Panc1 (cell line): ENCODE measurements at regions of chr16 and their contacts with region 1.

Region 1: DNA sequence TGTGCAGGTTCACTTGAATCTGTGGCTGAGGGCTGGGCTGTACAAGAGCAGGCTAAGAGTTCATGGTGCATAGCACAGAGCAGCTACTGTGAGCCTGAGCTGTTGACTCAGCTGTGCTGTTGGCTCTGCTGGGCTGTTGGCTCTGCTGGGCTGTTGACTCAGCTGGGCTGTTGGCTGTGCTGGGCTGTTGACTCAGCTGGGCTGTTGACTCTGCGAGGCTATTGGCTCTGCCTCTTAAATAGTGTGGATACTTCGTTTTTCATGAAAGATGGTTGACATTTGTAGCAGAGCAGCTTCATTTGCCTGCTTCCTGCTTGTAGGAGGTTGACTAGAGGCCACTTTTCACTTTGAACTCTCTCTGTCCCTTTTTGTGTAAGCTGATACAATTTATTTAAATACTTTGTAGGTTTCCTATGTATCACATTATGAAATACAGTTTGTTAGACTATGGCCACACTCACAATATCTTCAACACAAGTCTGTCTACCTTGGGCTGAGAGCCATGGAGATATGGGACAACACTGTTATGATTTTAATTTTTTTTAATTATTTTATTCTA is 40.3 kb upstream of the CCNF start:
- DNase-seq: peak; percentile 28
- ATAC-seq: peak; percentile 94
- H3K4me3 ChIP-seq: no peak overlapping the region
- H3K27ac ChIP-seq: peak overlapping the region; percentile 63
- H3K4me1 ChIP-seq: peaks cover 6% of the 10 kb centered on the region; the same call in 1 of the 2 replicates
- H3K27me3 ChIP-seq: no peaks in the 10 kb centered on the region
- CTCF ChIP-seq: no peak

Region 2: DNA sequence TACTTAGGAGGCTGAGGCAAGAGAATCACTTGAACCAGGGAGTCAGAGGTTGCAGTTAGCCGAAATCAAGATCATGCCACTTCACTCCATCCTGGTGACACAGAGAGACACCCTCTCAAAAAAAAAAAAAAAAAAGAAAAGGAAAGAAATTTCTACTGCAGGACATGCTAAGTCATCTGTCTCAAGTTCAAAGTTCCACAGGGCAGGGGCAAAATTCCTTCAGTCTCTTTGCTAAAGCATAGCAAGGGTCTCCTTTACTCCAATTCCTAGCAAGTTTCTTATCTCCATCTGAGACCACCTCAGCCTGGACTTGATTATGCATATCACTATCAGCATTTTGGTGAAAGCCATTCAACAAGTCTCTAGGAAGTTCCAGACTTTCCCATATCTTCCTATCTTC is 695.5 kb after region 1 on chr16:
- CTCF ChIA-PET with region 1: interaction called, 12 read pairs
- POLR2A ChIA-PET with region 1: no interaction called
- in situ Hi-C with region 1: no loop called
- intact Hi-C with region 1: no loop called
- DNase-seq: no peak
- ATAC-seq: no peak
- H3K4me3 ChIP-seq: no peak overlapping the region
- H3K27ac ChIP-seq: no peak overlapping the region
- H3K4me1 ChIP-seq: no peaks in the 10 kb centered on the region
- H3K27me3 ChIP-seq: no peaks in the 10 kb centered on the region
- CTCF ChIP-seq: no peak